GM12878 (cell line): ENCODE measurements at regions of chr7 and their contacts with region 1.

Region 1: GRCh38 chr7:88357781-88358525 is 51.3 kb upstream of the STEAP4 start:
- DNase-seq: no peak
- ATAC-seq: peak; percentile 86
- H3K4me3 ChIP-seq: no peak overlapping the region
- H3K27ac ChIP-seq: no peak overlapping the region
- H3K4me1 ChIP-seq: no peaks in the 10 kb centered on the region
- H3K27me3 ChIP-seq: no peaks in the 10 kb centered on the region
- CTCF ChIP-seq: peak; percentile 50 to 73 (median 59)
- EP300 ChIP-seq: no peak
- POLR2A ChIP-seq: no peak
- RAD21 ChIP-seq: peak; percentile 68

Region 2: DNA sequence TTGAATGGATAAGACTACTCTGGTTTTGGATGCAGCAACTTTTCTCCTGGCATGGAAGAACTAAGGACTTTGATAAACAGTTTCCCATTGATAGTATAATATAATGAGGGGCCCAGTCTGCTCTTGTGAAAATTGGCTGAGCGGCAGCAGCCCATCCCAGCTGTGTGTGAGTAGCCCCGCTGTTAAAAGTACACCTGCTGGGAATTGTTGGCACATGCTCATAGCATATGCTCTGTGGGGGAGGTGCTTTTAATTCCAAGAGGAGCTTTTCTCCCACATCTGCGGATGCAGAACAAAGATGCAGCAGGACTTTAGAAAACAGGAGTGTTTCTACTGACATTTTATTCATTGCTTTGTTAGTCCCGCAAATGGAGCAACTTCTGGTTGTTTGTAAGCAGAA is 157.2 kb before region 1 on chr7:
- CTCF ChIA-PET with region 1: interaction called, 10 read pairs
- POLR2A ChIA-PET with region 1: no interaction called
- RAD21 ChIA-PET with region 1: no interaction called
- SMC1A ChIA-PET with region 1: interaction called, 4 read pairs
- in situ Hi-C with region 1: no loop called
- intact Hi-C with region 1: no loop called
- DNase-seq: no peak
- ATAC-seq: no peak
- H3K4me3 ChIP-seq: no peak overlapping the region
- H3K27ac ChIP-seq: no peak overlapping the region
- H3K4me1 ChIP-seq: peaks cover 3% of the 10 kb centered on the region; the same call in 1 of the 2 replicates
- H3K27me3 ChIP-seq: no peaks in the 10 kb centered on the region
- CTCF ChIP-seq: no peak
- EP300 ChIP-seq: no peak
- POLR2A ChIP-seq: no peak
- RAD21 ChIP-seq: no peak

Region 3: DNA sequence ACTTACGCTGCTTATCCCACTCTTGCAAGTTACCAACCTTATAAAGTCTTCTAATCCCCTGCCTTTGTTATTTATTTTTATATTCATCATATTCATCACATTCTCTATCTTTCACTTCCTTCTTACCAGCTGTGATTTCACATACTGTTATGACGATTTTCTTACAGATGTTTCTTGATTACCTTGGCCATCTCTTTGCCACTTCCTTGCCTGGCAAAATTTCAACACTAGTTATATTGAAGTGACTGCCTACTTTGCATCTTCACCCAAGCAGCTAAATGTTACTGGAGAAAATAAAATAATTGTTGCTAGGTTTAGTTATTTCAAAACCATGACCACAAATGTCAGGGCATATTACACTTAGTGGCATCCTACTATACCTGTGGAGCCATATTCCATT is 42.4 kb before region 1 on chr7:
- CTCF ChIA-PET with region 1: interaction called, 10 read pairs
- POLR2A ChIA-PET with region 1: no interaction called
- RAD21 ChIA-PET with region 1: interaction called, 3 read pairs
- SMC1A ChIA-PET with region 1: no interaction called
- in situ Hi-C with region 1: no loop called
- intact Hi-C with region 1: no loop called
- DNase-seq: no peak
- ATAC-seq: peak; percentile 64
- H3K4me3 ChIP-seq: no peak overlapping the region
- H3K27ac ChIP-seq: no peak overlapping the region
- H3K4me1 ChIP-seq: no peaks in the 10 kb centered on the region
- H3K27me3 ChIP-seq: no peaks in the 10 kb centered on the region
- CTCF ChIP-seq: no peak
- EP300 ChIP-seq: peak in 1 of 2 experiments; percentile 22; a peak in 1 of 4 replicates
- POLR2A ChIP-seq: no peak
- RAD21 ChIP-seq: no peak

Region 4: DNA sequence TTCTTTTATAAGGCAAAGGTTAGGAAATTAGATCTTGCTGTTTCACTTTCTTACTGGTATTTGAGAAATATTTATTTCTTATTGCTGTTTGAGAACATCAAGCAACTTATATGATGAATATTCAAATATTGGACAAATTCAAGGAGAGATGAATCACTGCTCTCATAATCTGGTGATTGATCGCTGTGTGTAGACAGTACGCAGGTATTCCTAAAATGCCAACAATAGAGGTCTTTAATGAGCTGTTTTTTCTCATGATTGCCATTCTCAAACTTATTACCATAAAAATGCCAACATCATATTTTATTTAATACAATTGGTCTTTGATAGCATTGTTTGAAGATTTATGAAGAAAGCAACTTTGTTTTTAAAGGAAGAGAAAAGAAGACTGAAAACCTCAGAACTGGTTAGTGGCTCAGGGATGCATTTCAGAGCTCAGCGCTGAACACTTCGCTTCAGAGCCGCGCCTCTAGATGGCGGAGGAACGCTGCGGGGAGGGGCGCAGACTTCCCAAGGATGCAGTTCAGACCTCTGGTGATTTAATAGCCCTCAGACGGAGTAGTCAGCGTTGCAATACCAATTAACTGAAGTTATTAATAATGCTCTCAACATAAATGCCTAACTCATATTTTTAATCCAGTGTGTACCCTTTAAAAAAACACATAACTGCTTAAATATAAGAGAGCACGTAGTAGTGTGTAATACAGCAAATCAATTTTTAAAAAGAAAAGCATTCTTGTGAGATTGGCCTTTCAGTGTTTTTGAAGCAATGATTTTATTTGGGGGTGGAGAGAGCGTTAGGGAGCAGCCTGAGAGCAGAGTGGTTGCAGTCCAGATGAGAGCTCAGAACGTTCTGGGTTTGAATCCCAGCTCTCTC is 12.8 kb before region 1 on chr7:
- CTCF ChIA-PET with region 1: interaction called, 48 read pairs
- POLR2A ChIA-PET with region 1: no interaction called
- RAD21 ChIA-PET with region 1: interaction called, 18 read pairs
- SMC1A ChIA-PET with region 1: interaction called, 23 read pairs
- in situ Hi-C with region 1: no loop called
- intact Hi-C with region 1: no loop called
- DNase-seq: no peak
- ATAC-seq: peak; percentile 64
- H3K4me3 ChIP-seq: no peak overlapping the region
- H3K27ac ChIP-seq: no peak overlapping the region
- H3K4me1 ChIP-seq: no peaks in the 10 kb centered on the region
- H3K27me3 ChIP-seq: no peaks in the 10 kb centered on the region
- CTCF ChIP-seq: peak; percentile 27 to 55 (median 32); a peak in 5 of 6 replicates
- EP300 ChIP-seq: no peak
- POLR2A ChIP-seq: no peak
- RAD21 ChIP-seq: peak; percentile 67

Region 5: GRCh38 chr7:88835147-88835728 is 477.3 kb after region 1 on chr7:
- CTCF ChIA-PET with region 1: interaction called, 3 read pairs
- POLR2A ChIA-PET with region 1: no interaction called
- RAD21 ChIA-PET with region 1: no interaction called
- SMC1A ChIA-PET with region 1: no interaction called
- in situ Hi-C with region 1: no loop called
- intact Hi-C with region 1: loop called (anchors 5 kb)
- DNase-seq: peak; percentile 15
- ATAC-seq: peak; percentile 97
- H3K4me3 ChIP-seq: no peak overlapping the region
- H3K27ac ChIP-seq: no peak overlapping the region
- H3K4me1 ChIP-seq: no peaks in the 10 kb centered on the region
- H3K27me3 ChIP-seq: no peaks in the 10 kb centered on the region
- CTCF ChIP-seq: peak; percentile 47 to 63 (median 59)
- EP300 ChIP-seq: 0 out of 4 replicates have a peak, but pooled peaks of 1 of the 2 experiments have one; percentile 19
- POLR2A ChIP-seq: no peak
- RAD21 ChIP-seq: peak; percentile 71

Region 6: GRCh38 chr7:88859288-88859687 is 501.3 kb after region 1 on chr7:
- CTCF ChIA-PET with region 1: no interaction called
- POLR2A ChIA-PET with region 1: no interaction called
- RAD21 ChIA-PET with region 1: no interaction called
- SMC1A ChIA-PET with region 1: no interaction called
- in situ Hi-C with region 1: no loop called
- intact Hi-C with region 1: no loop called
- DNase-seq: no peak
- ATAC-seq: no peak
- H3K4me3 ChIP-seq: no peak overlapping the region
- H3K27ac ChIP-seq: no peak overlapping the region
- H3K4me1 ChIP-seq: no peaks in the 10 kb centered on the region
- H3K27me3 ChIP-seq: no peaks in the 10 kb centered on the region
- CTCF ChIP-seq: no peak
- EP300 ChIP-seq: no peak
- POLR2A ChIP-seq: no peak
- RAD21 ChIP-seq: no peak